Activated B cell treated with CpG ODN at 0.5 μM for 24 hours (primary cell): ENCODE measurements at regions of chr17 and their contacts with region 1.

Region 1: DNA sequence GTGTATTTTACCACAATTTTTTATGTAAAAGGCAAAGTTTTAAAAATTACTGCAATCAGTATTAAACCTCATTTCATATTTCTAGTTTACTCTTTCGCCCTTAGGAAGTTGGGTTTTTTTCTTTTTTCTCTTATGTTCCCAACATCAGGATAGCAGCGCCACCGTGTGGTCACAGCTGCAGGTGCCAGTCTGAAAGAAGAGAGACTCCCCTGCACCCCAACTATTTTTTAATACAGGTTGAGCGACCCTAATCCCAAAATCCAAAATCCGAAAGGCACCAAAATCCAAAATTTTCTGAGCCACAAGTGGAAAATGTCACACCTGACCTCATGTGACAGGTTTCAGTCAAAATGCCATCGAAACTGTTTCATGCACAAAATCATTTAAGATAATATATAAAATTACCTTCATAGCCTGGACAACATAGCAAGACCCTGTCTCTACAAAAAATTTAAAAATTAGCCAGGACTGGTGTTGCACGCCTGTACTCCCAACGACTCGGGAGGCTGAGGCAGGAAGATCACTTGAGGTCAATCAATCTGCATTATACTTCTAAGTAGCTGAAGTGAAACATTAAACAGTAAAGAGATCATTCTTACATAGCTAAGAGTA is 21.8 kb upstream of the ASGR2 start:
- DNase-seq: peak; percentile 60
- ATAC-seq: no peak
- H3K4me3 Mint-ChIP-seq: no peak overlapping the region
- H3K27ac Mint-ChIP-seq: no peak overlapping the region
- H3K4me1 Mint-ChIP-seq: peaks cover 27% of the 10 kb centered on the region
- H3K27me3 Mint-ChIP-seq: peaks cover 9% of the 10 kb centered on the region
- CTCF ChIP-seq: no peak

Region 2: GRCh38 chr17:6913608-6914443 is 222.5 kb before region 1 on chr17:
- CTCF ChIA-PET with region 1: interaction called, 8 read pairs
- POLR2A ChIA-PET with region 1: no interaction called
- intact Hi-C with region 1: loop called (anchors 1 kb)
- DNase-seq: peak; percentile 77
- ATAC-seq: peak; percentile 89
- H3K4me3 Mint-ChIP-seq: peak overlapping the region; percentile 83
- H3K27ac Mint-ChIP-seq: no peak overlapping the region
- H3K4me1 Mint-ChIP-seq: peaks cover 18% of the 10 kb centered on the region
- H3K27me3 Mint-ChIP-seq: peaks cover 24% of the 10 kb centered on the region
- CTCF ChIP-seq: peak; percentile 38

Region 3: GRCh38 chr17:7035591-7036368 is 100.6 kb before region 1 on chr17 and contains the start of gene SLC16A13:
- CTCF ChIA-PET with region 1: no interaction called
- POLR2A ChIA-PET with region 1: interaction called, 22 read pairs
- intact Hi-C with region 1: no loop called
- DNase-seq: peak; percentile 92
- ATAC-seq: peak; percentile 95
- H3K4me3 Mint-ChIP-seq: peak within 1 kb of the TSS; percentile 94
- H3K27ac Mint-ChIP-seq: peak within 1 kb of the TSS; percentile 98
- H3K4me1 Mint-ChIP-seq: peaks cover 42% of the 10 kb centered on the region
- H3K27me3 Mint-ChIP-seq: no peaks in the 10 kb centered on the region
- CTCF ChIP-seq: no peak
- total RNA-seq, gene SLC16A13: 10.4 and 11.8 TPM in 2 replicates

Region 4: GRCh38 chr17:7095625-7096024 is 40.7 kb before region 1 on chr17:
- CTCF ChIA-PET with region 1: no interaction called
- POLR2A ChIA-PET with region 1: interaction called, 13 read pairs
- intact Hi-C with region 1: loop called (anchors 2 kb)
- DNase-seq: no peak
- ATAC-seq: peak; percentile 47
- H3K4me3 Mint-ChIP-seq: peak overlapping the region; percentile 28
- H3K27ac Mint-ChIP-seq: peak overlapping the region; percentile 46
- H3K4me1 Mint-ChIP-seq: peaks cover 41% of the 10 kb centered on the region
- H3K27me3 Mint-ChIP-seq: peaks cover 4% of the 10 kb centered on the region
- CTCF ChIP-seq: no peak

Region 5: GRCh38 chr17:7204828-7205461 is 68.6 kb after region 1 on chr17:
- CTCF ChIA-PET with region 1: no interaction called
- POLR2A ChIA-PET with region 1: no interaction called
- intact Hi-C with region 1: loop called (anchors 2 kb)
- DNase-seq: peak; percentile 95
- ATAC-seq: peak; percentile 88
- H3K4me3 Mint-ChIP-seq: peak overlapping the region; percentile 87
- H3K27ac Mint-ChIP-seq: peak overlapping the region; percentile 94
- H3K4me1 Mint-ChIP-seq: peaks cover 30% of the 10 kb centered on the region
- H3K27me3 Mint-ChIP-seq: no peaks in the 10 kb centered on the region
- CTCF ChIP-seq: no peak

Region 6: DNA sequence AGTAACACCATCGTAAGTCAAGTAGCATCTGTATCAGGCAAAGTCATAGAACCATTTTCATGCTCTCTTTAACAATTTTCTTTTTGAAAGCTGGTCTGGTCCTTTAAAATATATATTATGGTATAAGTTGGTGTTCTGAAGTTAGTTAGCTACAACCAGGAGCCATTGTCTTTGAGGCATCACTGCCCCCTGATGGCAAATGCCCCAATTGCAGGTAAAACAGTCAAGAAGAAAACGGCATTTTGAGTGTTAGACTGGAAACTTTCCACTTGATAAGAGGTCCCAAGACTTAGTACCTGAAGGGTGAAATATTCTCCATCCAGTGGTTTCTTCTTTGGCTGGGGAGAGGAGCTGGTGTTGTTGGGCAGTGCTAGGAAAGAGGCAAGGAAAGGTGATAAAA is 536.9 kb after region 1 on chr17:
- CTCF ChIA-PET with region 1: no interaction called
- POLR2A ChIA-PET with region 1: no interaction called
- intact Hi-C with region 1: no loop called
- DNase-seq: no peak
- ATAC-seq: no peak
- H3K4me3 Mint-ChIP-seq: no peak overlapping the region
- H3K27ac Mint-ChIP-seq: no peak overlapping the region
- H3K4me1 Mint-ChIP-seq: peaks cover 7% of the 10 kb centered on the region
- H3K27me3 Mint-ChIP-seq: no peaks in the 10 kb centered on the region
- CTCF ChIP-seq: no peak